ENCODE measurements at regions of chr6 and their contacts with region 1.

Region 1: DNA sequence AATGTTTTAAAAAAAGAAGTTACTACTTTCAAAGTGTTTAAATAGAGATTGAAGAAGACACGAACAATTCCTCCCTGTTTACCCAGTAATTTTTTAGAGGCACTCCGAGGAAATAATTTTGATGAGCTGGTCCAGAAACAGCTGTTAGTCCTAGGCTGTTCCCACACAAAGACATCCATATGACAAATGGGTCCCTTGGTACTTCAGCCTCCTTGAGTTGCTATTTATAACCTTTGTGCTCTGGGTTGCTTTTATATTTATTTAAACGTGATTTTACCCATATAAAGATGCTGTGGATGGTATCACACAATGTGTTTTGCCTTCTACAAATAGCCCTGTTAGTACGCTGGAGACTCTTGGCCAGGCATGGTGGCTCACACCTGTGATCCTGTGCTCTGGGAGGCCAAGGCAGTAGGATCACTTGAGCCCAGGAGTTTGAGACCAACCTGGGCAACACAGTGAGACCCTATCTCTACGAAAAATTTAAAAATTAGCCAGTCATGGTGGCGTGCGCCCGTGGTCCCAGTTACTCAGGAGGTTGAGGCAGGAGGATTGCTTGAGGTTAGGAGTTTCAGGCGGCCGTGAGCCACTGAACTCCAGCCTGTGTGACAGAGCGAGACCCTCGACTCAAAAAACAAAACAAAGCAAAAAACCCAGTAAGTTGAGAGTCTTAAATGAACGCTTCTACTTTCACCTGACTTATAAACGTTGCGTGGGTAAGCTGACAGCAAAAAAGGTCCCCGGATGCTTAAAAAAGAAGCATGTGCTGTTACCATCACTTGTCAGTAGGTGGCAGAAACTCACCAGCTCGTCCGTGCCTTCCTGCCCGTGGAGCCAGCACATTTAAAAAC is 56.9 kb upstream of the ARMH2 start:
- DNase-seq: peak; percentile 44
- ATAC-seq: peak; percentile 89
- H3K4me3 Mint-ChIP-seq: no peak overlapping the region
- H3K27ac Mint-ChIP-seq: no peak overlapping the region
- H3K4me1 Mint-ChIP-seq: peaks cover 35% of the 10 kb centered on the region
- H3K27me3 Mint-ChIP-seq: no peaks in the 10 kb centered on the region
- CTCF ChIP-seq: peak; percentile 66; the same call in 1 of the 2 replicates

Region 2: DNA sequence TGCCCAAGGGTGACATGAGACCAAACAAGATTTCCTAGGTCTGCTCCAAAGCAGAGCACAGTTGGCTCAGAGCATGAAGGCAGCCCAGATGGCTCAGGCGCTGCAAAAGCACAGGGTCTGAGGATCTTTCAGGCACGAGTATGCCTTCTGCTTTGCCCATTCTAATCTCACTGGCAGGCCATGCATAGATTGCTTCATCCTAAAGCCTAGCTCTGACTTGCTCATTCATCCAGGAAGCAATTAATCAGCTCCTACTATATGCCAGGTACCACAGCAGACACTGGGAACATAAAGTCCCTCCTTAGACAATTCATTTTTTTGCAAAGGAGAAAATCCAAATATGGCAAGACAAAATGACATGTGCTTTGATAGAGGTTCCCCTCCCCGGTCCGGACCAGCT is 397.5 kb before region 1 on chr6:
- CTCF ChIA-PET with region 1: no interaction called
- POLR2A ChIA-PET with region 1: no interaction called
- DNase-seq: no peak
- ATAC-seq: no peak
- H3K4me3 Mint-ChIP-seq: no peak overlapping the region
- H3K27ac Mint-ChIP-seq: no peak overlapping the region
- H3K4me1 Mint-ChIP-seq: 0 out of 2 replicates have a peak, but pooled peaks cover 3% of the 10 kb centered on the region
- H3K27me3 Mint-ChIP-seq: no peaks in the 10 kb centered on the region
- CTCF ChIP-seq: no peak

Region 3: DNA sequence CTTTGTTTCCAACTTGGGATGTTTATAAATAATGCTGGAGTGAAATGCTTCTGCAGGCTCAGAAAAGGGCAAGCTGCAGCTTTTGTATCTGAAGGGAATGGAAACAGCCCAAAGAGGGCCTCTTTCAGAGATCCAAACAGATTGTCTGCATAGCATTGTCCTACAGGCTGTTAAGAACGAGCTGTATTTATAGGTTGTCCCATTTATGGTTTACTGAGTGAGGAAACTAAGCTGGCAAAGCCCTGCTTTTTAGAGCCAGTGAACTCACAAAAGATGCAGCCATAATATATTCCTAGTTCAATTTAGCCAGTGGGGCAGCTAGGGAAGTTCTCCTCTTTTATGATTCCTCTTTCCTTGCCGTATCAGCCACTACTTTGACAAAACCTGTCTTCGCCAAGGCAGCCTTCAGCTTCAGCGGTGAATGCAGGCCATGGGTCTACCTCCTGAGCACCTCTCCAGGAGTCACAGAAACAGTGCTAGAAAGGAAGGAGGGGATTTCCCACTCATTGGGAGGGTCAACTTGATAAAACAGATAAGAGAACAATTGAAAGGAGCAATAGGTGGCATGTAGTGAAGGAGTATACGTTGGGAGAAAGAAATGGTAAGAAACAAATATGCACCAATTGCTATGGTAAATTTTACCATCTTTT is 224.6 kb before region 1 on chr6:
- CTCF ChIA-PET with region 1: no interaction called
- POLR2A ChIA-PET with region 1: no interaction called
- DNase-seq: no peak
- ATAC-seq: peak; percentile 34; the same call in 1 of the 2 replicates
- H3K4me3 Mint-ChIP-seq: no peak overlapping the region
- H3K27ac Mint-ChIP-seq: peak overlapping the region; percentile 22
- H3K4me1 Mint-ChIP-seq: peaks cover 27% of the 10 kb centered on the region
- H3K27me3 Mint-ChIP-seq: no peaks in the 10 kb centered on the region
- CTCF ChIP-seq: no peak

Region 4: DNA sequence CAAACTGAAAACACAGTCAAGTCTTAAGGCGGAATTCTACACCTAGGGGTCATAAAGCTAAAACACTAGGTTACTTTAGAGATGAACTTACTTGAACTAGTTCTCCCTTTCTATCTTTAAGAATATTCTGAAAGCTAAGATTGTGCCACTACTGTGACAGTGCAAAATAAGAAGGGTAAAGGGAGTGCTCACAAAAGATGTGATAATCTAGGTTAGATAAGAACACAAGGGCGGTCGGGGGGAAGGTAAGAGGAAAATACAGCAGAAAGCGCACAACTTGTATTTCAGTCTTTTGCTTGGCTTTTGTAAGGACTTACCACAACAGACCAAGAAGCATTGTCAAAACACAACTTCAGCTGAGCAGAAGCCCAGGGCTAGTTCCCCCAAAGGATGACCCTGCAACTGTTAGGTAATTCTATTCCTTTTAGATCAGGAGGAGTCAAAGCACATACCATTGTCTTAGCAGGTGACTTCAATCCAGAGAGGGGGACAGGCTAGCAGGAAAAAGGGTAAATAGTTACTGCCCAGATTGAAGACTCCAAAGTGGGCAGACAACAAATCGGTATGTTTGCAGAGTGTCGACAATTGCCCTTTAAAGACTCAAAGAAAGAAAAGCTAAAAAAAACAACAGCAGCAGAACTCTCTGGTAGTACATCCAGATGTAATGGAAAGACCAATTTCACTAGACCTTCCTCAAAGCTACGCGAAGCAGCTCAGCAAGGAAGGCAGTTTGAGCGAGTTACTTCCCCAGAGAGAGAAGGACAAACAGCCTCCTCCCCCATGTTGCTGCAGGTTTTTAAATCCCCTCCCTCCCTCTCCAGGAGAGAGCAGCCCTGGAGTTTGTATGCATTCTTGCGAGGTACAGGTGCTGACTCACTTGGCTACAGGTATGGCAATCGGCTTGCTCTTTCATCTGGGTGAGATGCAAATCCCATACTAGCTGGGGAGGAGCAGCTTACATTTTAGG is 21.2 kb after region 1 on chr6:
- CTCF ChIA-PET with region 1: interaction called, 16 read pairs
- POLR2A ChIA-PET with region 1: interaction called, 4 read pairs
- DNase-seq: peak; percentile 59
- ATAC-seq: peak; percentile 95
- H3K4me3 Mint-ChIP-seq: peak overlapping the region; percentile 44
- H3K27ac Mint-ChIP-seq: peak overlapping the region; percentile 74
- H3K4me1 Mint-ChIP-seq: peaks cover 72% of the 10 kb centered on the region
- H3K27me3 Mint-ChIP-seq: no peaks in the 10 kb centered on the region
- CTCF ChIP-seq: no peak

Region 5: DNA sequence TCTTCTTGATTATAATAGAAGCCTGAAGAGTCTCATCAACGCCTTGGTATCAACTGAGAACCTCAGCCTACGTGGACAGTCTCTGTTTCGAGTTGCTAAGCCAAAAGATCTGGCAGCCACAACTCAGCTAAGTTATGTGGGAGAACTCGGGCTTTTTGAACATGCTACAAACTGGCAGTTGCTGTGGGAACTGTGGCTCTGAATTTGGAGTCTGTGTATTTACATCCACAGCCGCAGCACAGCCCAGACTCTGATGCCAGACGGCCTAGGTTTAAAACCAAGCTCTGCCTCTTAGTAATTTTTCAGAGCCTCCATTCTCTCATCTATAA is 44.3 kb after region 1 on chr6:
- CTCF ChIA-PET with region 1: interaction called, 13 read pairs
- POLR2A ChIA-PET with region 1: no interaction called
- DNase-seq: no peak
- ATAC-seq: no peak
- H3K4me3 Mint-ChIP-seq: no peak overlapping the region
- H3K27ac Mint-ChIP-seq: no peak overlapping the region
- H3K4me1 Mint-ChIP-seq: peaks cover 23% of the 10 kb centered on the region
- H3K27me3 Mint-ChIP-seq: no peaks in the 10 kb centered on the region
- CTCF ChIP-seq: no peak

Region 6: DNA sequence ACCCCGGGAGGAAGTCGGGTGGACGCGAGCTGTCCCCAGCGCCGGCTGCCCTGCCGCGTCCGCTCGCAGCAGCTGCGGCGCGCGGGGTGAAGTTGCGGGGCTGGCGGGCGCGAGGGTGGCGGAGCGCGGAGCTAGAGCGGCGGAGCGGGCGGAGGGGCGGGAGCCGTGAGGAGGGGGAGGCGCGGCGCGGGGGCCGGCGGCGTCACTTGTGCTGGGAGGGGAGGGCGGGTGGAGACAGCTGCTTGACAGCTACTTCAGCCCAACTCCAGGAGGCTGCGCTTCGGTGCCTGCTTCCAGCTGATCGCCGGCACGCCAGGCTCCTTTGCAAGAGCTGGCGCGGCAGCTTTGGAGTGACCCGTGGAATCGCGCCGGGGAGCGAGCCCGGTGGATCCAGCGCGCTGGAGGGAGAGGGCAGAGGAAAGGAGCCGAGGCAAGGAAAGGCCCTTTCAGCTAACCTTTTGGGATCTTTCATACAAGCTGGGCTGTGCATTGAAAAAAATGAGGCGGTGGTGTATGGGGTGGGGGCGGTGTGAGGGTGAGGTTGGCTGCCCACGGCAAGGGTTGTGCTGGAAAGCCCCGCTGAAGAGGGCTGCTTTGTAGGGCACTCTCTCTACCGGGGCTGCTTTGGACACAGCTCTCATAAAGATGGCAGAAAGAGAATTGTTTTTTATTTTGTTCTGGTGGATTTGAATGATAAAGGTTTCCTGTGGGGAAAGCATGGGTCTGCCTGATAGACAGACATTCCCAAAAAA is 55.5 kb after region 1 on chr6:
- CTCF ChIA-PET with region 1: interaction called, 19 read pairs
- POLR2A ChIA-PET with region 1: no interaction called
- DNase-seq: peak; percentile 69
- ATAC-seq: peak; percentile 50
- H3K4me3 Mint-ChIP-seq: peak overlapping the region; percentile 78
- H3K27ac Mint-ChIP-seq: no peak overlapping the region
- H3K4me1 Mint-ChIP-seq: peaks cover 34% of the 10 kb centered on the region
- H3K27me3 Mint-ChIP-seq: peaks cover 51% of the 10 kb centered on the region
- CTCF ChIP-seq: no peak

Region 7: GRCh38 chr6:24919004-24919892 is 63.6 kb after region 1 on chr6:
- CTCF ChIA-PET with region 1: interaction called, 12 read pairs
- POLR2A ChIA-PET with region 1: interaction called, 5 read pairs
- DNase-seq: peak; percentile 18
- ATAC-seq: peak; percentile 32
- H3K4me3 Mint-ChIP-seq: no peak overlapping the region
- H3K27ac Mint-ChIP-seq: peak overlapping the region; percentile 80
- H3K4me1 Mint-ChIP-seq: peaks cover 50% of the 10 kb centered on the region
- H3K27me3 Mint-ChIP-seq: no peaks in the 10 kb centered on the region
- CTCF ChIP-seq: no peak

Region 8: DNA sequence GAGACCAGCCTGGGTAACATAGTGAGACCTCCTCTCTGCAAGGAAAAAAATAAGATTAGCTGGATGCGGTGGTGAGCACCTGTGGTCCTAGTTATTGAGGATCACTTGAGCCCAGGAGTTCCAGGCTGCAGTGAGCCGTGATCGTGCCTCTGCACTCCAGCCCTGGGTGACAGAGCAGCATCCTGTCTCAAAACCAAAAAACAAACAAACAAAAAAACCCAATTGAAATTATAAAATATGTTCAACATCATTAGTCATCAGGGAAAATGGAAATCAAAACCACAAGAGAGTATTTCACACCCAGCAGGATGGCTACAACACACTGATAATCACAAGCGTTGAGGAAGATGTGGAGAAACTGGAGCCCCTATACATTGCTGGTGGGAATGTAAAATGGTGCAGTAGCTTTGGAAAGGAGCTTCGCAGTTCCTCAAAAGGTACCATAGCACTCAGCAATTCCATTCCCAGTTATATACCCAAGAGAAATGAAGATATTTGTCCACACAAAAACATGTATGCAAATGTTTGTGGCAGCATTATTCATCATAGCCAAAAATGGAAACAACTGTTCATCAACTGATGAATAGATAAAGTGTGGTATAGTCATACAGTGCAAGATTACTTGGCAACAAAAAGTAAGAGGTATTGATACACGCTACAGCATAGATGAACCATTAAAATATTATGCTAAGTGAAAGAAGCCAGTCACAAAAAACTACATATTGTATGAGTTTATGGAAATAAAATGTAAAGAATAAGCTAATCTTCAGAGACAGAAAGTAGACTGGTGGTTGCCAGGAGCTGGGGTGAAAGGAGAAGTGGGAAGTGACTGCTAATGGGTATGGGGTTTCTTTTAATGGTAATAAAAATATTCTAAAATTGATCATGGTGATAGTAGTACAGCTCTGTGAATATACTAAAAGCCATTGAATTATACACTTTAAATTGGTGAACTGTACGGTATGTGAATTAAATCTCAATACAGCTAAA is 118.9 kb after region 1 on chr6:
- CTCF ChIA-PET with region 1: no interaction called
- POLR2A ChIA-PET with region 1: no interaction called
- DNase-seq: no peak
- ATAC-seq: no peak
- H3K4me3 Mint-ChIP-seq: no peak overlapping the region
- H3K27ac Mint-ChIP-seq: no peak overlapping the region
- H3K4me1 Mint-ChIP-seq: peaks cover 43% of the 10 kb centered on the region
- H3K27me3 Mint-ChIP-seq: no peaks in the 10 kb centered on the region
- CTCF ChIP-seq: no peak

Region 9: DNA sequence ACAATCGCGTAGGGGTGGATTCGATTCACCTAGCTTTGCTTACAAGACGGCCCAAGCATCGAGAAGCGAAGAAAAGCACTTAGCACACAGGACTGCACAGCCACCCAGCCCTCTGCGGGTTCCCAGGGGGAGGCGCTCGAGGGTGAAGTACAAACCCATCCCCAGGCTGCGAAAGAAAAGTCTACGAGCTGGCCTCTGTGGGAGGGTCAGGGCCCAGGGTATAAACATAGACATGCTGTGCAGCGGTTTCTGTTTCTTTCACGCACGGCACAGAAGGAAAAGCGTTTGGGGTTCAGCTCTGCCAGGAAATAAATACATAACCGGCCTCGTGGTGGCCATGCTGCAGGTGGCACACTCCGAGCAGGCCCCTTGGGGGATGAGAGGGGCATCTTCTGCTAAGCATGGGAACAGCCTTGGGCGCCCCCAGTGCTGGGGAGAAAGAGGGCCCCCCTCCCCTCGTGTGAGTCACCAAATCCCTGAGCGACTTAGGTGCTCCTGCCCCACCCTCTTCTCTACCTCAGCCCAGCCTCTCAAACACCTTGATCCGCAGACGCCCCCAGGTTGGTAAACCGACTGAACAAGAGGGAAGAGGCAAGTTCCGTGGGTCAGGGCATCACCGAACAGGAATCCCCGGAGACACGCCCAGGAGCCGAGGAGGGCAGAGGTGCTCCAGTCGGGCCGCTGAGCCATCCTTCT is 171.7 kb after region 1 on chr6:
- CTCF ChIA-PET with region 1: interaction called, 18 read pairs
- POLR2A ChIA-PET with region 1: no interaction called
- DNase-seq: peak; percentile 46
- ATAC-seq: peak; percentile 91
- H3K4me3 Mint-ChIP-seq: no peak overlapping the region
- H3K27ac Mint-ChIP-seq: no peak overlapping the region
- H3K4me1 Mint-ChIP-seq: peaks cover 30% of the 10 kb centered on the region
- H3K27me3 Mint-ChIP-seq: no peaks in the 10 kb centered on the region
- CTCF ChIP-seq: no peak

Region 10: DNA sequence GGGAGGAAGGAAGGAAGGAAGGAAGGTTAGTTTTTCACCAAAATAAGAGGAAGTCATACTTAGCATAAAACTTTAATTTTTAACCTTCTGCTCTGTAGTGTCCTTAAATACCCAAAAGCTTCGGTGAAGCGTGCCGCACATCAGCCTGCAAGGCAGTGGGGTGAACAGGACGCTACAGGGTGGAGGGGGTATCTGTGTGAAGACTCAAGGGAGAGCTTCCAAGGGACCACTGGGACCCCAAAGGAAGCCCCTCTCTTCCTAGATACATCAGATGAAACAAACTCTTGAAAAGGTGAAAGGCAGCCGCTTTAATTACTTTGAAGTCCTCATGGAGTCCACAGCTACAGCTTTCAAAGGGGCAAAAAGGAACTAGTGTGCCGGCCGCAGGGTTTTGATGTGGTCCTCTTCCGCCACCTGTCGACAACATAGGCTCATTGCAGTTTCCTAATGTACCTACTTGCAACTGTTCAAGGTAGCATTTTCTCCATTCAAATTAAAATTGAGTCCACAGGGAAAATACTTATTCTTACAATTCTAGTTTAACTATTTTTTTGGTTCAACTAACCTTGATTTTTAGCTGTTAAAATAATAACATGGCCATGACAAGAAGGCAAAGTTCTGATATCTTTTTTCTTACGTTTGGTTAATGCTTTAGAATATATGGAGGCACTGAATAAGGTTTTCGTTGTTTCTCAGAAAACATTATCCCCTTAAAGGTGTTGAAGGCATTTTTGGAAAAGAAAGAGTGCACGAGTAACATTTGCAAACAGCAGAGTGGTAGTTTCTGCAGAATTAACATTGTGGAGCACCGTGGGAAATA is 215.1 kb after region 1 on chr6:
- CTCF ChIA-PET with region 1: interaction called, 12 read pairs
- POLR2A ChIA-PET with region 1: no interaction called
- DNase-seq: peak; percentile 78
- ATAC-seq: peak; percentile 85
- H3K4me3 Mint-ChIP-seq: peak overlapping the region; percentile 22; the same call in 1 of the 2 replicates
- H3K27ac Mint-ChIP-seq: no peak overlapping the region
- H3K4me1 Mint-ChIP-seq: no peaks in the 10 kb centered on the region
- H3K27me3 Mint-ChIP-seq: no peaks in the 10 kb centered on the region; the same call in 1 of the 2 replicates
- CTCF ChIP-seq: peak; percentile 90

Measured in WTC11 (cell line).